Heart right ventricle (tissue), 16 donors: ENCODE measurements at regions of chr7 and their contacts with region 1.

Region 1: GRCh38 chr7:156639426-156640256 is 933 bp upstream of the RNF32 start:
- DNase-seq: no peak
- ATAC-seq: peak; percentile 4 to 49 (median 19)
- H3K4me3 ChIP-seq: peak overlapping the region; percentile 64 to 95 (median 82)
- H3K27ac ChIP-seq: peak overlapping the region in 9 of 10 donors; percentile 52 to 87 (median 60)
- H3K4me1 ChIP-seq: peaks cover 0 to 24% (median 13%) of the 10 kb centered on the region in 9 donors
- H3K27me3 ChIP-seq: peaks cover 0 to 15% (median 4%) of the 10 kb centered on the region in 7 donors
- CTCF ChIP-seq: no peak

Region 2: DNA sequence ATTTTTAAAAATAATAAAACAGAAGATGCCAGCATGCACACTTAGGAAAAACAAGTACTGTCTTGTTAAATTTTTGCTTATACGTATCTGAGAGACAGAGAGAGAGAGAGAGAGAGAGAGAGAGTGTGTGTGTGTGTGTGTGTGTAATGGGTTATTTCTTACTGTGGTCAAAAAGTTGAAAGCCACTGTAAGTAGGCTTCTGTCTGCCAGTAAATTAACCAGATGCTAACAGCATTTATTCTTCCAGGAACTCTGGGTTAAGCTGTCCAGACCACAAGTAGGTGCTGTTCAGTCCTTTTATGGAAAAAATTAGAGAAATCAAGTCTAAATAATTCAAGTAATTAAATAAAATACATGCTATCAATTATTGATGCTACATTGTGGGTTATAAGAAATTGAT is 40.6 kb after region 1 on chr7:
- intact Hi-C with region 1: no loop called
- DNase-seq: no peak
- ATAC-seq: no peak
- H3K4me3 ChIP-seq: no peak overlapping the region
- H3K27ac ChIP-seq: no peak overlapping the region
- H3K4me1 ChIP-seq: no peaks in the 10 kb centered on the region
- H3K27me3 ChIP-seq: no peaks in the 10 kb centered on the region
- CTCF ChIP-seq: no peak

Region 3: GRCh38 chr7:156802214-156802613 is 162.6 kb after region 1 on chr7:
- intact Hi-C with region 1: no loop called
- DNase-seq: no peak
- ATAC-seq: no peak
- H3K4me3 ChIP-seq: no peak overlapping the region
- H3K27ac ChIP-seq: no peak overlapping the region
- H3K4me1 ChIP-seq: no peaks in the 10 kb centered on the region
- H3K27me3 ChIP-seq: no peaks in the 10 kb centered on the region
- CTCF ChIP-seq: no peak

Region 4: GRCh38 chr7:158564663-158565035 is 1925.0 kb after region 1 on chr7:
- intact Hi-C with region 1: loop called in 1 of 10 experiments (anchors 5 kb)
- DNase-seq: no peak
- ATAC-seq: no peak
- H3K4me3 ChIP-seq: no peak overlapping the region
- H3K27ac ChIP-seq: no peak overlapping the region
- H3K4me1 ChIP-seq: no peaks in the 10 kb centered on the region
- H3K27me3 ChIP-seq: peaks cover 2 to 82% (median 69%) of the 10 kb centered on the region in 7 donors
- CTCF ChIP-seq: no peak